ENCODE measurements at regions of chr5 and their contacts with region 1.

Region 1: GRCh38 chr5:139251281-139251687 is 42.3 kb upstream of the MATR3 start:
- DNase-seq: no peak
- H3K4me3 ChIP-seq: no peak overlapping the region
- CTCF ChIP-seq: no peak
- POLR2A ChIP-seq: no peak

Region 2: DNA sequence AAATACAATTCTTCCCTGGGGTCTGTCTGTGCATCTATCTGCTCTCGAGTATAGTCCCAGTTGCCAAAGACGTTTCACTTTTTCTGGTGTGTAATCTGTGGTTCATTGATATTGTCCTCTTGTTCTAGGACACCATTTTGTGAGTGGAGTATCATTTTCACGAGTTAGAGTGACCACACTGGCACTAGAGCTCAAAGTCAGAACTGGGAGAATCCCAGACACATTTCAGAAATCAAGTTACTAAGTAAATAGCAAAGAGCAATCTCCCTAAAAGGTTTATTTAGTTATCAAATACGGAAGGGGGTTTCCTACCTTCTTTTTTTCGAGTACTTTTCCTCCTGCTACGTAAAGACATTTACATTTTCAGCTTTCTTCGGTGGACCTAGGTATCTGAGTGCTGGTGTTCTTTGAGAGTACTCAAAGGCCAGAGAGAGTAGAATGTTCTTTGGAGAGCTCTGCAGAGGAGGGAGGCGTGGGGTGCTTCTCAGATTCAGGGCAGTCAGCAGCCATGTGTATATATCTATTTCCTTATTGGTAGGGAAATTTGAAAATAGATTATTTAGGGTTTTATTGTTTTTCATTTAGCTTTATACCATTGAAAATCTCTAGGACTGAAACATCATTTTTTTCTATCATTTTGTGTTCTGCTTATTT is 667.2 kb before region 1 on chr5:
- intact Hi-C with region 1: loop called (anchors 10 kb)
- DNase-seq: no peak
- H3K4me3 ChIP-seq: no peak overlapping the region
- CTCF ChIP-seq: no peak
- POLR2A ChIP-seq: no peak

Region 3: DNA sequence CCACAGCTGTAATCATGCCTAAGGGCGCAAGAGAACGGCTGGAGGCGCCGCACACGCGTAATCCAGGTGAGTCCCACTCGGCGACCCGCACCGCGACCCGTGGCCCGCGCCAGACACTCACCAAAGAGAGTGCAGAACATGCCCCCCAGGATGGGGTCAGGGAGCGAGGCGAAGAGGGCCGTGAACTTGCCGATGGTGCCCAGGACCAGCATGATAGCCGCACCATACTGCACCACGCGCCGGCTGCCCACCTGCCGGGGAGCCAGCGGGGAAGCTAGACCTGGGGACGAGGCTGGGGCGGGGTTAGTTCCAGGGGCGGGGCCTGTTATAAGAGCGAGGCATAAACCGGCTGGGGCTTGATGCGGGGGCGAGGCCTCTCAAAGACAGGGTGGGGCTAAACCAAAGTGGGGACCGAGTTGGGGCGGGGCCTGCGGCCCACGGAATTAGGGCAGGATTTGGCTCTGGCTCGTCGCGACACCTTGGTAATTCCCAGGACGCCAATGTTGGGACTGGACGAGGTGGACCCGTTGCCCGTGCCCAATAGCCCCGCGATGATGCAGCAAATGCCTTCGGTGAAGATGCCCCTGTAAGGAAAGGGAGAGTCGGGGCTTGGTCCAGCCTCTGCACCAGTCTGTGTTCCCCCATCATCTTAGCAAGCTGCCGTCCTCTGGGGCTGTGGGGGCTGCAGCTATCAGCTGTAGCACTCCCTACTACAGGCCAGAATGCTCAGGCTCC is 127.0 kb after region 1 on chr5:
- intact Hi-C with region 1: no loop called
- DNase-seq: peak in 1 of 2 donors; percentile 82
- H3K4me3 ChIP-seq: no peak overlapping the region
- CTCF ChIP-seq: no peak
- POLR2A ChIP-seq: no peak

Measured in lower leg skin (tissue), 4 donors.